ENCODE measurements at regions of chr13 and their contacts with region 1.

Region 1: GRCh38 chr13:51435002-51435578 is 17.7 kb downstream of the INTS6 start:
- DNase-seq: no peak
- ATAC-seq: no peak
- H3K4me3 ChIP-seq: no peak overlapping the region
- H3K27ac ChIP-seq: no peak overlapping the region
- H3K4me1 ChIP-seq: peaks cover 5% of the 10 kb centered on the region
- H3K27me3 ChIP-seq: no peaks in the 10 kb centered on the region
- CTCF ChIP-seq: peak; percentile 18; the same call in 1 of the 2 replicates
- EP300 ChIP-seq: no peak
- POLR2A ChIP-seq: no peak
- RAD21 ChIP-seq: no peak

Region 2: GRCh38 chr13:51093574-51093973 is 341.5 kb before region 1 on chr13:
- CTCF ChIA-PET with region 1: no interaction called
- POLR2A ChIA-PET with region 1: no interaction called
- in situ Hi-C with region 1: no loop called
- intact Hi-C with region 1: no loop called
- DNase-seq: no peak
- ATAC-seq: no peak
- H3K4me3 ChIP-seq: no peak overlapping the region
- H3K27ac ChIP-seq: no peak overlapping the region
- H3K4me1 ChIP-seq: no peaks in the 10 kb centered on the region
- H3K27me3 ChIP-seq: peaks cover 0 to 15% of the 10 kb centered on the region in 2 experiments; a peak in 1 of 5 replicates
- CTCF ChIP-seq: no peak
- EP300 ChIP-seq: no peak
- POLR2A ChIP-seq: no peak
- RAD21 ChIP-seq: no peak

Region 3: GRCh38 chr13:51479199-51479523 is 44.1 kb after region 1 on chr13:
- CTCF ChIA-PET with region 1: no interaction called
- POLR2A ChIA-PET with region 1: no interaction called
- in situ Hi-C with region 1: no loop called
- intact Hi-C with region 1: no loop called
- DNase-seq: peak; percentile 51
- ATAC-seq: peak; percentile 78
- H3K4me3 ChIP-seq: peak overlapping the region in 2 of 3 experiments; percentile 36 to 46; a peak in 3 of 6 replicates
- H3K27ac ChIP-seq: peak overlapping the region; percentile 51
- H3K4me1 ChIP-seq: peaks cover 50% of the 10 kb centered on the region
- H3K27me3 ChIP-seq: no peaks in the 10 kb centered on the region
- CTCF ChIP-seq: no peak
- EP300 ChIP-seq: no peak; a peak in 1 of 4 replicates
- POLR2A ChIP-seq: no peak
- RAD21 ChIP-seq: no peak

Region 4: GRCh38 chr13:51781246-51782022 is 346.3 kb after region 1 on chr13:
- CTCF ChIA-PET with region 1: no interaction called
- POLR2A ChIA-PET with region 1: no interaction called
- in situ Hi-C with region 1: no loop called
- intact Hi-C with region 1: loop called (anchors 5 kb)
- DNase-seq: no peak
- ATAC-seq: peak; percentile 77
- H3K4me3 ChIP-seq: no peak overlapping the region
- H3K27ac ChIP-seq: no peak overlapping the region
- H3K4me1 ChIP-seq: peaks cover 19% of the 10 kb centered on the region
- H3K27me3 ChIP-seq: no peaks in the 10 kb centered on the region
- CTCF ChIP-seq: peak; percentile 68
- EP300 ChIP-seq: no peak
- POLR2A ChIP-seq: no peak
- RAD21 ChIP-seq: peak; percentile 50

Measured in HepG2 (cell line).